Naive thymus-derived CD4-positive, alpha-beta T cell (primary cell): ENCODE measurements at regions of chr17 and their contacts with region 1.

Region 1: DNA sequence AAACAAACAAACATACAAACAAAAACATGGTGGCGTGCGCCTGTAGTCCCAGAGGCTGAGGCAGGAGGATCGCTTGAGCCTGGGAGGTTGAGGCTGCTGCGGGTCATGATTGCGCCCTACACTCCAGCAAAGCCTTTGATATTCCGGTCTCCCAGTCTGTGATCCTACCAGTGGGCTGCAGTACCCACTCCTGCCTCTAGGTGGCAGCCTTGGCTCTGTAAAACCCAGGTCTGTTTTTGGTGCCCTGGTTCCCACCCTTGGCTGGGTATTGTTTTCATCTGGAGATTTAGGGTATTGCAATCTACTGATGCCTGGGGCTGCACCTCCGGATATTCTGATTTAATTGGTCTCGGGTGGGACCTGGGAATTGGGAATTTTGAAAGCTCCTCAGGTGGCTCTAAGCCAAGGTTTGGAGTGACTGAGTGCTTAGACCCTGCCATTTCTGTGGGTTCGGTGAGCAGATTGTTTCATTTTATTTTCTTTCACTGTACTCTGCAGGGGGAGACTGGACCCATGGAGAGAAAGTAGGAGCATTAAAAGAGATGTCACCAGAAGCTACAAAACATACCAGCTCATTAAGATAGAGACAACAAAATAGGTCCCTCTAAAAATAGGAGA is 40.5 kb downstream of the MYH3 start:
- DNase-seq: peak; percentile 24 to 75 (median 47)
- ATAC-seq: peak; percentile 84
- H3K4me3 ChIP-seq: no peak overlapping the region
- H3K4me3 Mint-ChIP-seq: no peak overlapping the region
- H3K27ac ChIP-seq: no peak overlapping the region
- H3K27ac Mint-ChIP-seq: no peak overlapping the region
- H3K4me1 ChIP-seq: no peaks in the 10 kb centered on the region
- H3K4me1 Mint-ChIP-seq: peaks cover 0 to 3% (median 0%) of the 10 kb centered on the region in 7 donors
- H3K27me3 ChIP-seq: no peaks in the 10 kb centered on the region
- H3K27me3 Mint-ChIP-seq: peaks cover 0 to 15% (median 0%) of the 10 kb centered on the region in 5 donors

Region 2: GRCh38 chr17:10327640-10328039 is 289.0 kb before region 1 on chr17:
- CTCF ChIA-PET with region 1: no interaction called
- POLR2A ChIA-PET with region 1: no interaction called
- intact Hi-C with region 1: loop called in 1 of 2 experiments (anchors 1 kb)
- DNase-seq: peak in 7 of 9 donors; percentile 13 to 68 (median 25)
- ATAC-seq: peak; percentile 69
- H3K4me3 ChIP-seq: no peak overlapping the region
- H3K4me3 Mint-ChIP-seq: no peak overlapping the region
- H3K27ac ChIP-seq: no peak overlapping the region
- H3K27ac Mint-ChIP-seq: no peak overlapping the region
- H3K4me1 ChIP-seq: no peaks in the 10 kb centered on the region
- H3K4me1 Mint-ChIP-seq: peaks cover 0 to 5% (median 0%) of the 10 kb centered on the region in 7 donors
- H3K27me3 ChIP-seq: no peaks in the 10 kb centered on the region
- H3K27me3 Mint-ChIP-seq: peaks cover 0 to 19% (median 2%) of the 10 kb centered on the region in 5 donors

Region 3: GRCh38 chr17:10836145-10836544 is 219.5 kb after region 1 on chr17:
- CTCF ChIA-PET with region 1: no interaction called
- POLR2A ChIA-PET with region 1: no interaction called
- intact Hi-C with region 1: no loop called
- DNase-seq: no peak
- ATAC-seq: no peak
- H3K4me3 ChIP-seq: no peak overlapping the region
- H3K4me3 Mint-ChIP-seq: no peak overlapping the region
- H3K27ac ChIP-seq: no peak overlapping the region
- H3K27ac Mint-ChIP-seq: no peak overlapping the region
- H3K4me1 ChIP-seq: no peaks in the 10 kb centered on the region
- H3K4me1 Mint-ChIP-seq: no peaks in the 10 kb centered on the region
- H3K27me3 ChIP-seq: no peaks in the 10 kb centered on the region
- H3K27me3 Mint-ChIP-seq: no peaks in the 10 kb centered on the region